Sigmoid colon (tissue), 7 donors: ENCODE measurements at regions of chr1 and their contacts with region 1.

Region 1: DNA sequence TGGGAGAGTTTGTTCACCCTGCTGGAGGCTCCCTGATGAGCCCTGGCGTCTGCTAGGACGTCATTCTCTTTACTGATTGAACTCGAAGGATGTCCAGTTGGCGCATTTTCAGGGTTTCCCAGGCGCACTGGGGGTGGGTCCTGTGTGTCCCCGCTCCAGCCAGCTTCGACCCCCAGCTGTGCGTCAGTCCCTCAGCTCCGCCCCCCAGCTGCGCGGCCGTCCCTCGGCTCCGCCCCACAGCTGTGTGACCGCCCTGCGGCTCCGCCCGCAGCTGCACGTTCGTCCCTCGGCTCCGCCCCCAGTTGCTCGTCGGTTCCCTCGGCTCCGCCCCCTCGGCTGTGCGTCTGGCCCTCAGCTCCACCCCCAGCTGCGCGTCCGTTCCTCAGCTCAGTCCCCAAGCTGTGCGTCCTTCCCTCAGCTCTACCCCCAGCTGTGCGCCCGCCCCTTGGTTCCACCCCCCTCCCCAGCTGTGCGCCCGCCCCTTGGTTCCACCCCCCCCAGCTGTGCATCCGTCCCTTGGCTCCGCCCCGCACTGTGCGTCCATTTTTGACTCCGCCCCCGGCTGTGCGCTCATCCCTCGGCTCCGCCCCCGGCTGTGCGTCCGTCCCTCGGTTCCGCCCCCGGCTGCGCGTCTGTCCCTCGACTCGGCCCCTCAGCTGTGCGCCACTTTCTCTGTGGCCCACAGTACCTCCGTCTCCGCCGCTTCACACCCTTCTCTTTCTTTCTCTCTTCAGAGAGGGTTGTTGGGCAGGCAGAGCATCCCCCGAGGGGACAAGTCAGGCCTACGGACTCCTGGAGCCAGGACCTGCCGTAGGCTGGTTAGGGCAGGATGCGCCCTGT is 61.3 kb downstream of the FAAP20 start:
- DNase-seq: peak; percentile 100
- H3K4me3 ChIP-seq: peak overlapping the region; percentile 18 to 54 (median 46)
- H3K27ac ChIP-seq: peak overlapping the region; percentile 89 to 93 (median 92)
- H3K4me1 ChIP-seq: peaks cover 0 to 32% (median 27%) of the 10 kb centered on the region in 4 donors
- H3K27me3 ChIP-seq: no peaks in the 10 kb centered on the region
- CTCF ChIP-seq: peak in 1 of 4 experiments; percentile 19
- EP300 ChIP-seq: peak in 2 of 4 donors; percentile 34 to 84
- POLR2A ChIP-seq: peak; percentile 39 to 56

Region 2: DNA sequence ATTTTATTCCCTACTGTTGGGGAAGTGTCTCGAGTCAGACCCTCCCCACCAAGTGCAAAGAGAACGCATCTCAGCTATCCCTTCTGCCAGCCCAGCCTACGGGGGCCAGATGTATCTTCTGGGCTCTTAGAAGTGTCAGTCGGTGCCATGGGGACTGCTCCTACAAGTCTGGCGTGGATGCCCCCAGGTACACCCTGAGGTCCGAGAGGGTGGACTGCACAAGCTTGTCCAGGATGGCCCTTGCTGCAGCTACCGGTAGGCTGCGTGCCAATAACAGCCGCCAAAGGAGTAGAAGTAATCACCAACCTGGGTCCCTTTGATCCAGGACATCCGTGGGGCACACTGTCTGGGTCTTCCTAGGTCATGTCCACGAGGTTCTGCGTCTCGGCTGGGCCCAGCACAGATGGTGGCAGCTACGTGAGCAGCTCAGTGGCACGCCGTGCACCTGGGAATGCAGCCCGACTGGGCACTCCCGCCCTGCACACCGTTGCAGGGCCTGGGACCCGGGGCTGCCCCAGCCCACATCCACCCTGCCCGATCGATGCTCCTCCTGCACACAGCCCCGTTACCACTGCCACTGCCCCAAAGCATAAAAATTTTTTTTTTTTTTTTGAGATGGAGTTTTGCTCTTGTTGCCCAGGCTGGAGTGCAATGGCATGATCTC is 549.8 kb before region 1 on chr1:
- intact Hi-C with region 1: no loop called
- DNase-seq: no peak
- H3K4me3 ChIP-seq: no peak overlapping the region
- H3K27ac ChIP-seq: no peak overlapping the region
- H3K4me1 ChIP-seq: no peaks in the 10 kb centered on the region
- H3K27me3 ChIP-seq: peaks cover 0 to 28% (median 6%) of the 10 kb centered on the region in 3 donors
- CTCF ChIP-seq: no peak
- EP300 ChIP-seq: no peak
- POLR2A ChIP-seq: no peak

Region 3: DNA sequence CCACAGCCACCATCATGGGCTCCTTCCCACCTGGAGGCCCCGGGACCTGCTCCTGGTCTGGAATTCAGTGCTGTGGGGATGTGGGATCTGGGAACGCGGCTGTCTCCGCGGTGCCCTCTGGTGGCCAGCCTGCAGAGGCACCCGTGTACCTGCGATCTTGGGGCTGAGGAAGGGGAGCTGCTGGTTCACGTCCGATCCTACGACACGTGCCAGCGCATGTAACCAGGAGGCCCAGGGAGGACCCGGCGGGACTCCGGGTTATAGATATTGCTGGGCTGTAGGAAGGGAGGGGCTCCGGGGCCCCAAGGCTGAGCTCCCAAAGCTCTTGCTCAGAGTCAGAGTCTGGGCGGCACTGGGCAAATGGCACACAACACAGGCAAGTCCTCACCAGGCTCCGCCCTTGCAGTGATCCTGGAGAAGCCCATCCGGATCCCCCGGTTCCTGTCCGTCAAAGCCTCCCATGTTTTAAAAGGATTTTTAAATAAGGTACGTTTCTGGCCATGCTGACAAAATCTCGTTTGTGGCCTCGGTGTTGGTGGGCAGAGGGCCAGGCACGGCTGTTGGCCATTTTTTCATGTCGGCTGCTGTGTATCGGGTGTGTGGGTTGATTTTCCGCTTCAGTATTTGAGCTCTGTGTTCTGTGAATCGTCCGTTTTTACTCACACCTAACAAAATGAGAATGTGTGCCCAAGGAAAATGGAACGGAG is 41.2 kb after region 1 on chr1:
- intact Hi-C with region 1: loop called (anchors 1 kb)
- DNase-seq: peak; percentile 89
- H3K4me3 ChIP-seq: peak overlapping the region; percentile 29 to 56 (median 45)
- H3K27ac ChIP-seq: peak overlapping the region; percentile 55 to 72 (median 58)
- H3K4me1 ChIP-seq: peaks cover 0 to 13% (median 0%) of the 10 kb centered on the region in 4 donors
- H3K27me3 ChIP-seq: no peaks in the 10 kb centered on the region
- CTCF ChIP-seq: peak; percentile 88 to 94 (median 92)
- EP300 ChIP-seq: no peak
- POLR2A ChIP-seq: no peak

Region 4: GRCh38 chr1:2391041-2391930 is 258.0 kb after region 1 on chr1 and contains the starts of genes MORN1 and RER1:
- intact Hi-C with region 1: loop called (anchors 5 kb)
- DNase-seq: peak; percentile 99
- H3K4me3 ChIP-seq: peak within 1 kb of the TSS; percentile 71 to 100 (median 85)
- H3K27ac ChIP-seq: peak within 1 kb of the TSS; percentile 83 to 96 (median 92)
- H3K4me1 ChIP-seq: peaks cover 0 to 45% (median 40%) of the 10 kb centered on the region in 4 donors
- H3K27me3 ChIP-seq: no peaks in the 10 kb centered on the region
- CTCF ChIP-seq: no peak
- EP300 ChIP-seq: peak in 1 of 4 donors; percentile 69
- POLR2A ChIP-seq: peak; percentile 16 to 41
- total RNA-seq, gene MORN1: 6.2 to 9.1 (median 6.7) TPM
- total RNA-seq, gene RER1: 49.0 to 56.2 (median 50.7) TPM

Region 5: GRCh38 chr1:2403983-2404839 is 271.0 kb after region 1 on chr1:
- intact Hi-C with region 1: no loop called
- DNase-seq: no peak
- H3K4me3 ChIP-seq: no peak overlapping the region
- H3K27ac ChIP-seq: peak overlapping the region in 3 of 4 donors; percentile 2 to 42 (median 21)
- H3K4me1 ChIP-seq: no peaks in the 10 kb centered on the region
- H3K27me3 ChIP-seq: no peaks in the 10 kb centered on the region
- CTCF ChIP-seq: no peak
- EP300 ChIP-seq: no peak
- POLR2A ChIP-seq: no peak

Region 6: DNA sequence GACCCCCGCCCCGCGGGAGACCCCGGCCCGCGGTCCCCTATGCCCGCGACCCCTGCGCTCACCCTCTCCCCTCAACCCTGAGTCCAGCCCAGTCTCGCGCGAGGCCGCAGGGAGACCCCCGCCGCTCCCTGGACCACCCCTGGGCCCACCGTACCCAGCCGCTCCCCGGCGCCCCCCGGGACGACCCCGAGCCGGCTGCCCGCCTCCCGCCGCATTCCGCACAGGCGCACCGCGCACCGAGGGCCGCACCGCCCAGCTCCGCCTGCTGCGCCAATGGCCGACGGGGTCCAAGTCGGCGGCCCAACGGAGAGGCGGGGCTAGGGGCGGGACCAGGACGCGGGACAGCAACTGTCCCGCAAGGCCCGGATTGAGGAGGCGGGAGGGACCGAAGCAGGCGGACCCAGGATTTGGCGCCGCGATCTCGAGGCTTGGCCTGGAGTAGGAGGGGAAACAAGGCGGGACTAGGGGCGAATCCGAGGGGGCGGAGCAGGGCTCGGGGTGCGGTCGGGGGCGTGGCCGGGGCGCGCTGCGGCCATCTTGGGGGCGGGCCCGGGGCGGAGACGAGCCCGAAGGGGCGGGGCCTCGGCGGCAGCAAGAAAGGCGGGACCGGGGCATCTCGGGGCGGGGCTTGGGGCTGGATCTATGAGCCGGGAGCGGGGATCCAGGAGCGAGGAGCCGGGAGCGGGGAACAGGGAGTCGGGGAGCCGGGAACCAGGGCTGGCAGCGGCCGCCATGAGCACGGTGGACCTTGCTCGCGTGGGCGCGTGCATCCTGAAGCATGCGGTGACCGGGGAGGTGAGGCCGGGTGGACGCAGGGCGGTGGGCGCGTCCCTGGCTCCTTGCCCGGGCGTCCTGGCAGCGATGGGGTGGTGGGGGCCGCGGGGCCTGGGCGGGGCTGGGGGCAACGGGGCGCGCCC is 453.2 kb after region 1 on chr1 and contains the start of gene PRXL2B:
- intact Hi-C with region 1: no loop called
- DNase-seq: peak; percentile 100
- H3K4me3 ChIP-seq: peak within 1 kb of the TSS; percentile 91 to 96 (median 94)
- H3K27ac ChIP-seq: peak within 1 kb of the TSS; percentile 99 to 100 (median 100)
- H3K4me1 ChIP-seq: peaks cover 0 to 40% (median 33%) of the 10 kb centered on the region in 4 donors
- H3K27me3 ChIP-seq: no peaks in the 10 kb centered on the region
- CTCF ChIP-seq: no peak
- EP300 ChIP-seq: no peak
- POLR2A ChIP-seq: peak in 1 of 2 donors; percentile 50
- total RNA-seq, gene PRXL2B: 8.6 to 18.2 (median 15.3) TPM